Left colon (tissue), 2 donors: ENCODE measurements at regions of chr4 and their contacts with region 1.

Region 1: DNA sequence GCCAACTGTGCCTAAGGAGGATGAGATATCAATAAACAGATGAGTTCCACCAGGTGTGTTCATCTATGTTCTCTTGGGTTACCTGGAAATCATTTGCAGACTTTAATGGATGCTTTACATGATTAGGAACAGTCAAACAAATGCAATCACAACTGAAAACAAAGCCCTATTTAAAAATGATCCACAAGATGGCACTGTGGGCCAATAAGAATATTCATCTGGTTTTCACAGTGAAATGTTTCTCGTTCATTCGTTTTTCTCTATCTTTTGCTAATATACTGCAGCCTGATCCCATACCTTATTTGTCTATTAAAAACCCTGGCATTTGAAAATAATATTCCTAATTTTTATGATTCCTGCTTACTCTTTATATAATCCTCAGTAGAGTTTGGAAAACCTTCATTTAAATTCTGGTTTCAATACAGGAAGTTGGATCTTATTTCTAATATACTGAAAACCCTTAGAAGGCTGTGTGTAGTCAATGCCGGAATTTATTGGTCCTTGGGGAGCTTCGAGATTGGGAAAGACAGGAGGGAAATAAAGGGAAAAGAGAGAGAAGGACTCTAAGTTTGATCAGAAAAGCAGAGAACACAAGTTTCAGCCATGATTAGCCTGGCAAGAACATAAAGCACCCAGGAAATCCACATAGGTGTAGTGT is 63.8 kb upstream of the TAPT1 start:
- DNase-seq: no peak
- ATAC-seq: peak; percentile 61

Region 2: DNA sequence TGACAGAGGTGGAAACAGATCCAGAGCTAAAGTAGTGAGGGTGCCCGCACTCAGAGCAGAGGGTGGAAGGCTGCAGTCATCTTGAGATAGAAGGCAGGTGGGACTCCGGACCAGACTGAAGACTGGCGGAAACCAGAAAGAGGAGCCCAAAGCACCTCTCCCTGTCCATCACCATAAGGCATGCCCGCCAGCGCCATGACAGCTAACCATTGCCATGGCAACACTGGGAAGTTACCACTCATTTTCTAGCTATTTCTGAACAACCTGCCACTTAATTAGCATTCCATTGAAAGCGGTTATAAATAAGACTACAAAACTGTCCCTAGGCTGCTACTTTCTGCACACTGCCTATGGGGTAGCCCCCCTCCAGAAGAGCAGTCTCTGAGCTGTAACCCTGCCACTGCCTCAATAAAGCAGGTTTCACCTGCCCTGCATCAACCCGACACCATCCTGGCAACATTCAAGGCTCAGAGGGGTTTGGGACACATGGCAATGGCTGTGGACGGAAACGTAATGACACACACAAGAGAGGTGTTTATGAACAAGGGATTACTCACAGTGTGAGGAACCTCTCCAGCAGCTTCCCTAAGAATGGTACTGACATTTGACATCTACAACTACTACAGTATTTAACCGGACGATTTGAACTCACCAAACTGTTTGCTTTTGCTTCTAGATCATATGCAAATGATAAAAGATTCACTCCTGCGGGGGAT is 299.3 kb before region 1 on chr4:
- intact Hi-C with region 1: no loop called
- DNase-seq: no peak
- ATAC-seq: no peak

Region 3: GRCh38 chr4:16001484-16001858 is 288.6 kb before region 1 on chr4:
- intact Hi-C with region 1: no loop called
- DNase-seq: peak; percentile 35 to 52
- ATAC-seq: peak; percentile 95

Region 4: DNA sequence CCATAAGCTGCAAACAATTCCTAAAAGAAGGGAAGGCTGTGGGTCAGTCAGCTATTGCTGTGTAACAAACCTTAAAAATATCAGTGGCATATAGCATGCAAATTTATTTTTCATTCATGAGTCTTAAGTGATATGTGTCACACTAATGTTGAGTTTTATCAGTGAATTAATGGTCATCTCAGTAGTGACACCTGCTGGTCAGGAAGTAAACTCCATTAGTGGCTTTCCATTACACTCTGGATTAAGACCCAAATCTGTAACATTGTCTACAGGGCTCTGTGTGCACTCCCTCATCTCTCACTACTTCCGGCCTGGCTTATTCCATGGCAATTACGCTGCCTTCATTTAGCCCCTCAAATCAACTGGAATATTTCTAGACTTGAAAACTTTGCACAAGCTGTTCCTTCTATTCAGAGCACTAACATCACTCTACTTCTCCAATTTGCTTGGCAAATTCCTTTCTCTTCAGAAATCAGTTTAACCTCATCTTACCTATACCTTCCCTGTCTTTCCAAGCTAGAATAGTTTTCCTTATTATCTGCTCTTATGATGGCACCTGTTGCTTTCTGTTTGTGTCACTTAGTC is 153.6 kb after region 1 on chr4:
- intact Hi-C with region 1: loop called in 1 of 2 experiments (anchors 5 kb)
- DNase-seq: no peak
- ATAC-seq: peak; percentile 40

Region 5: GRCh38 chr4:16827794-16828724 is 538.0 kb after region 1 on chr4:
- intact Hi-C with region 1: no loop called
- DNase-seq: no peak
- ATAC-seq: no peak

Region 6: GRCh38 chr4:17324386-17324830 is 1034.4 kb after region 1 on chr4:
- intact Hi-C with region 1: loop called in 1 of 2 experiments (anchors 10 kb)
- DNase-seq: peak in 1 of 2 donors; percentile 27
- ATAC-seq: no peak

Region 7: GRCh38 chr4:17447675-17448298 is 1157.8 kb after region 1 on chr4:
- intact Hi-C with region 1: loop called in 1 of 2 experiments (anchors 5 kb)
- DNase-seq: peak in 1 of 2 donors; percentile 27
- ATAC-seq: peak; percentile 82